Common myeloid progenitor, CD34-positive (primary cell): ENCODE measurements at regions of chr11 and their contacts with region 1.

Region 1: GRCh38 chr11:67436459-67437081 is 912 bp downstream of the PTPRCAP start:
- DNase-seq: peak in 1 of 3 donors; percentile 45
- H3K4me3 ChIP-seq: peak overlapping the region in 6 of 7 experiments; percentile 15 to 89 (median 78)
- H3K27ac ChIP-seq: peak overlapping the region; percentile 25 to 70
- H3K4me1 ChIP-seq: peaks cover 1 to 82% (median 75%) of the 10 kb centered on the region in 4 experiments
- H3K27me3 ChIP-seq: no peaks in the 10 kb centered on the region

Region 2: GRCh38 chr11:67286621-67287333 is 149.8 kb before region 1 on chr11:
- CTCF ChIA-PET with region 1: no interaction called
- POLR2A ChIA-PET with region 1: no interaction called
- DNase-seq: peak in 1 of 3 donors; percentile 46
- H3K4me3 ChIP-seq: peak overlapping the region in 2 of 7 experiments; percentile 25 to 38
- H3K27ac ChIP-seq: peak overlapping the region; percentile 90 to 97
- H3K4me1 ChIP-seq: peaks cover 0 to 90% (median 86%) of the 10 kb centered on the region in 4 experiments
- H3K27me3 ChIP-seq: no peaks in the 10 kb centered on the region

Region 3: DNA sequence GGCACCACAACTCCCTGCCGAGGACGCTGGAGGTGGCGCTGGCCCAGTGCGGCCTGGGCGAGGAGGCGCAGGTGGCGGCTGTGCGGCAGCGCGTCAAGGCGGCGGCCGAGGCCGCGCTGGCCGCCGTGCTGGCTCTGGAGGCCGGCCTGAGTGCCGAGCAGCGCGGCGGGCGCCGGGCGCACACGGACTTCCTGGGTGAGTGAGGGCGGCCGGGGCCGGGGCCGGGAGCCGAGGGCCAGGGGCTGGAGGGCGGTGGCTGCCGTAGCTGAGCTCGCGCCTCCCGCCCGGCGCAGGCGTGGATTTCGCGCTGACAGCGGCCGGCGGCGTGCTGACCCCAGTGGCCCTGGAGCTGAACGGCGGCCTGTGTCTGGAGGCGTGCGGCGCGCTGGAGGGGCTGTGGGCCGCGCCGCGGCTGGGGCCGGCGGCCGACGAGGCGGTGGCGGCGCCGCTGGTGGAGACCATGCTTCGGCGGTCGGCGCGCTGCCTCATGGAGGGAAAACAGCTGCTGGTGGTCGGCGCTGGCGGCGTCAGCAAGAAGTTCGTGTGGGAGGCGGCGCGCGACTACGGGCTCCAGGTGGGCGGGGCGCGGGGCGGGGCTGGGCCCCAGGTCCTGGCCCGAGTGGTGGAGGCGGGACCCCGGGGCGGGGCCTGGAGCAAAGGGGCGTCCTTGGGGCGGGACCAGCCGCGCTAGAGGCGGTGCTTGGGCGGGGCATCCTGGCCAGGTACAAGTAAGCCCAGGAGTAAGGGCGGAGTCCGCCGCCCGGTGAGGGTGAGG is 15.7 kb before region 1 on chr11:
- CTCF ChIA-PET with region 1: interaction called, 8 read pairs
- POLR2A ChIA-PET with region 1: interaction called, 10 read pairs
- DNase-seq: peak; percentile 93 to 97 (median 96)
- H3K4me3 ChIP-seq: peak overlapping the region in 6 of 7 experiments; percentile 28 to 73 (median 64)
- H3K27ac ChIP-seq: peak overlapping the region in 1 of 2 experiments; percentile 5
- H3K4me1 ChIP-seq: peaks cover 0 to 75% (median 53%) of the 10 kb centered on the region in 4 experiments
- H3K27me3 ChIP-seq: no peaks in the 10 kb centered on the region

Region 4: DNA sequence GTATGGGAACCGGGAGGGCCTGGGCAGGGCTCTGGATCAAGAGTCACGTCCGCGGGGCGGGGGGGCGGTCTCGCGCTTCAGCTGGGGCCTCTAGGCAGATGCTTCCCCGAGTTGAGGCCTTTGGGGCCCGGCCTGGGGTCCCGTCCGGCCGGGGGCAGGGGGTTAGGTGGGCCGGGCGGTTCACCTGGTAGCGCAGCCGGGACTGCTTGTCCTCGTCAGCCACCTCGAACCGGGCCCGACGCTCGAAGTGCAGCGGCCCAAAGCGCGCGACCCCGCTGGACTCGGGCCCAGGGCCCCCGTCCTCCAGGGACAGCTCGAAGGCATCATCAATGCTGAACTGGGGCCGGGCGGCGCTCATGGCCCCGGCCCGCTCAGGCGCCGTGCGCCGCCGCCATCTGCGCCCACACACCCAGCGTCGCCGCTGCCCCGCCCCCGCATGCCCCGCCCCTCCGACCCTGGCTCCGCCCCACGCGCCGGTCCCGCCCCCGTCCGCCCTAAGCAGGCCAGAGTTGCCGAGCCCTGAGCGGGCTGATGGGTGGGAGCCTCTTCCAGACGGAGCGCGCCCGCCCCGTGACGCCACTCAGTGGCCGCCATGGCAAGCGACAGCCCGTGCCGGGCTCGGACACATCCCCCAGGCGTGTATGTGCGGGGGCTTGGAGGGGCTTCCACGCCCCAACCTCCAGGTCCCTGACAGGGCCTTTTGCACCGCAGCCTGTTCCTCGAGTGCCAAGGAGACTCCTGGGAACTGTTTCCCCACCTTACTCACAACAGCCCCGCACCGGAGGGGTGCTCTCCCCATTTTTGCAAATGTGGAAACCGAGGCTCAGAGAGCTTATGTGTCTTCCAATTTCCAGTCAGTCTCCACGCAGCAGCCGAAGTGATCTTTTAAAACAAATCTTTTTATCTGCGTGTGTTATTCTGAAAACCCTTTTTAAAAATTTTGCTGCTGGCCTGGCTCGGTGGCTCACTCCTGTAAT is 32.6 kb after region 1 on chr11 and contains the start of gene TMEM134:
- CTCF ChIA-PET with region 1: interaction called, 19 read pairs
- POLR2A ChIA-PET with region 1: interaction called, 5 read pairs
- DNase-seq: peak; percentile 93 to 95 (median 94)
- H3K4me3 ChIP-seq: peak within 1 kb of the TSS; percentile 59 to 88 (median 80)
- H3K27ac ChIP-seq: peak within 1 kb of the TSS; percentile 33 to 68
- H3K4me1 ChIP-seq: peaks cover 3 to 40% (median 27%) of the 10 kb centered on the region in 4 experiments
- H3K27me3 ChIP-seq: no peaks in the 10 kb centered on the region